B cell (primary cell): ENCODE measurements at regions of chr3 and their contacts with region 1.

Region 1: GRCh38 chr3:38346587-38347410 is at the start of gene XYLB:
- DNase-seq: peak; percentile 79
- ATAC-seq: peak; percentile 98
- H3K4me3 ChIP-seq: peak within 1 kb of the TSS in 4 of 5 experiments; percentile 30 to 68 (median 60)
- H3K4me3 Mint-ChIP-seq: peak within 1 kb of the TSS; percentile 88
- H3K27ac ChIP-seq: no peak within 1 kb of the TSS
- H3K27ac Mint-ChIP-seq: peak within 1 kb of the TSS; percentile 41
- H3K4me1 ChIP-seq: peaks cover 0 to 10% of the 10 kb centered on the region in 2 donors
- H3K4me1 Mint-ChIP-seq: peaks cover 5% of the 10 kb centered on the region
- H3K27me3 ChIP-seq: no peaks in the 10 kb centered on the region
- H3K27me3 Mint-ChIP-seq: peaks cover 2% of the 10 kb centered on the region
- CTCF ChIP-seq: peak; percentile 69
- total RNA-seq, gene XYLB: 0.63 and 0.71 TPM in 2 replicates

Region 2: GRCh38 chr3:38117748-38118420 is 228.9 kb before region 1 on chr3:
- CTCF ChIA-PET with region 1: interaction called, 5 read pairs
- POLR2A ChIA-PET with region 1: no interaction called
- intact Hi-C with region 1: loop called (anchors 2 kb)
- DNase-seq: peak; percentile 71
- ATAC-seq: peak; percentile 84
- H3K4me3 ChIP-seq: no peak overlapping the region
- H3K4me3 Mint-ChIP-seq: no peak overlapping the region
- H3K27ac ChIP-seq: no peak overlapping the region
- H3K27ac Mint-ChIP-seq: no peak overlapping the region
- H3K4me1 ChIP-seq: peaks cover 19 to 23% of the 10 kb centered on the region in 2 donors
- H3K4me1 Mint-ChIP-seq: peaks cover 22% of the 10 kb centered on the region
- H3K27me3 ChIP-seq: no peaks in the 10 kb centered on the region
- H3K27me3 Mint-ChIP-seq: peaks cover 7% of the 10 kb centered on the region
- CTCF ChIP-seq: peak; percentile 81

Region 3: DNA sequence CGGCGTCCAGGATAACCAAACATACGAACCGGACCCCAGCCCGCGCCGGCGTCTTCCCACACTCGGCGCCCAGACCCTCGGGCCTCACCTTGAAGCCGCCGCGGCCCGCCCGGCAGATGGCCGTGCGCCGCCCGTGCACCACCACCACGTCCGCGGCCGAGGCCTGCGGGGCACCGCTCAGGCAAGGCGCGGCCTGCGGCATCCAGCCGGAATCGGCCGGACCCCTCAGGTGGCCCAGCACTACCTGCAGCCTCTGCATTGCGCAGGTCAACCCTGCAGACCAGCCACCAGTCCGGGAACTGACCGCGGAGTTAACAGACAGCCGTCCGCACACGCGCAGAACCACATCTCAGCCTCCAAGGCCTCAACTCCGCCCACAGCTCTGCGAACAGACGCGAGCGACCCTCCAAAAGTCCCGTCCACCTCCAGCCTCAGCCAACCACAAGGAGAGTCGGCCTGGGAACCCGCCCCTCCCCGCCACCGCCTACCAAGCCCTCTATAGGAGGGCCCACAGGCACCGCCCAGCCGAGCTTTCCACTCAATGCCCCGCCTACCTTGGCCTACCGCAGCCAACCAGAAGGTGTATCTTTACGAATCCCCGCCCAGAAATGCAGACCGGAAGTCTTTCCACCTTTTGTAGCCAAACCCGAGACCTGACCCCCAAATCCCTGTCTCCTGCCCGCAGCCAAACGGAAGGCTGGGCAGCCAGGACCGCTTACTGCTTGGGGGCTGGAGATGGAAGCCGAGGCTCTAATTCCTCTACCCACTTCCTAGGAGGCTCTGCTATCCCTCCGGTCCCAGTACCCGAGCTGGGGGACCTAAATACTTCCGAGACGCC is 209.8 kb before region 1 on chr3 and contains the start of gene ACAA1:
- CTCF ChIA-PET with region 1: interaction called, 3 read pairs
- POLR2A ChIA-PET with region 1: no interaction called
- intact Hi-C with region 1: loop called (anchors 5 kb)
- DNase-seq: peak; percentile 99
- ATAC-seq: peak; percentile 91
- H3K4me3 ChIP-seq: peak within 1 kb of the TSS; percentile 84 to 98 (median 92)
- H3K4me3 Mint-ChIP-seq: peak within 1 kb of the TSS; percentile 92
- H3K27ac ChIP-seq: peak within 1 kb of the TSS; percentile 85 to 87
- H3K27ac Mint-ChIP-seq: peak within 1 kb of the TSS; percentile 94
- H3K4me1 ChIP-seq: peaks cover 39 to 52% of the 10 kb centered on the region in 2 donors
- H3K4me1 Mint-ChIP-seq: peaks cover 65% of the 10 kb centered on the region
- H3K27me3 ChIP-seq: no peaks in the 10 kb centered on the region
- H3K27me3 Mint-ChIP-seq: no peaks in the 10 kb centered on the region
- CTCF ChIP-seq: no peak
- total RNA-seq, gene ACAA1: 87.4 and 98.4 TPM in 2 replicates

Region 4: DNA sequence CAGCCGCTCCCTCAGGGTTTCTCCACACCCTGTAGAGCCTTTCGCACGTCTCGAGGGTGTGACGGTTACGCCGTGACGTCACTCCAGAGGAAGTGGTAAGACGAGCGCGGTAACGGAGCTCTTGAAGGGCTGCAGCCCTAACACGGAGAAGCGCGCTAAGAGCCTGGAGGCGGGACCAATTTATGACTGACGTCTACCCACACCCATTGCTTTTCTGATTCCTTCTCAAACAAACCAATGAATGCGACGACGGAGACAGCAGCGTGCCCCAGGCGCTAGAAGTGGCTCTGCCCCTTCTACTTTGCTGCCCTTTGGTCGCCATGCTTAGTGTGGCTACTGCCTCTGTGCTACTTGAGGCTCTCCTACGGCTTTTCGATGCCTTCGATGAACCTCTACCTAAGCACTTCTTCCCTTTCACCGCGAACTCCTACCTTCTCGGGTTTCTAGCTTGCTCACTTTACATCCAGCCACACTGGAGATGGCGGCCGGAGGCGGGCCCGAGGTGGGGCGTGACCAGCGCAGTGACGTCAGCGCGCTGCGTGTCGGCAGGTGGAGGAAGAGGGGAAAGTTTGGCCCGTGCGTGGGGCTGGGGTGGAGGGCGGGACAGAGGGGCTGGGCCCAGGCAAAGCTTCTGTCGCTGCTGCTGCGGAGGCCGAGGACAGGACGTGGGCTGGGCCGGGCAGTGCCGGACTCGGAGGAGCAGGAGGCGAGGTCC is 181.7 kb before region 1 on chr3 and contains the start of gene OXSR1:
- CTCF ChIA-PET with region 1: interaction called, 4 read pairs
- POLR2A ChIA-PET with region 1: no interaction called
- intact Hi-C with region 1: loop called (anchors 2 kb)
- DNase-seq: peak; percentile 99
- ATAC-seq: peak; percentile 89
- H3K4me3 ChIP-seq: peak within 1 kb of the TSS; percentile 64 to 97 (median 85)
- H3K4me3 Mint-ChIP-seq: peak within 1 kb of the TSS; percentile 94
- H3K27ac ChIP-seq: peak within 1 kb of the TSS; percentile 98 to 100
- H3K27ac Mint-ChIP-seq: peak within 1 kb of the TSS; percentile 100
- H3K4me1 ChIP-seq: peaks cover 21 to 28% of the 10 kb centered on the region in 2 donors
- H3K4me1 Mint-ChIP-seq: peaks cover 50% of the 10 kb centered on the region
- H3K27me3 ChIP-seq: no peaks in the 10 kb centered on the region
- H3K27me3 Mint-ChIP-seq: no peaks in the 10 kb centered on the region
- CTCF ChIP-seq: no peak
- total RNA-seq, gene OXSR1: 37.9 and 41.5 TPM in 2 replicates

Region 5: DNA sequence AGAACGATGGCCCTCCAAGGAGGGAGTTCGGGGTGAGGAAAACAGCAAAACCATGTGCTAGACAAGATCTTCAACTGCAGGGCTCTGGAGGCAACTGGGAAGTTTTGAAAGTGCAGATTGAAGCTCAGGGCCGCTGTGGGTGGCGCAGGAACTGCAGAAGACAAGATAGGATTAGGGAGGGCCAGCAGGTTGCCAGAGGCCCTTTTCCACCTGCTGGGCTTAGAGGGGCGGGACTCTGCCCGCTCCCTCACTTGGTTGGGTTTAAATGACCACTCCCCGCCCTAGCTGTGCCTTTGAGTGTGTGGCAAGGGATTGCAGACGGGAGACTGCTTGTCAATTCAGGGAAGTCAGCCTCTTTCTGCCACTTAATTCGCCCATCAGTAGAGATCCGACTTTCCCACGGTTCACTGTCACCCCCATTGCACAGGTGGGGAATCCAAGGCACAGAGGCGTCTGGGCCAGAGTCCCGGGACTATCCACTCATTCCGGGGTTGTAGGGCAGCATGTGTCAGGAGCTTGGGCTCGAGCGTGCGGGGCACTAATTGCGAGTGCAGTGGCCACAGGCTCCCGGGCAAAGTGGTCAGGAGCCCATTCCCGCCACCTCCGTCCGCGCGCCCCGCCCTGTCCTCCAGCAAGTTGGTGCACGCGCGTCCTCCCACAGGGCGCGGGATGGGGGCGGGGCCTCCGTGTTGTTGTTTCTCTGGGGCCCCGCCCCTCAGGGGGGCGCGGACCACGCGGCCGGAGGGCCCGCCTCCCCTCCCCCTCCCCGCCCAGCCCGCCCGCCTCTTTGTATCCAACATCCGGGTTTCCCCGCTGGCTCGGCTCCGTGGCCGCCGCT is 106.5 kb after region 1 on chr3 and contains the start of gene ACVR2B:
- CTCF ChIA-PET with region 1: no interaction called
- POLR2A ChIA-PET with region 1: no interaction called
- intact Hi-C with region 1: loop called (anchors 10 kb)
- DNase-seq: peak; percentile 51
- ATAC-seq: peak; percentile 81
- H3K4me3 ChIP-seq: peak within 1 kb of the TSS; percentile 40 to 63 (median 55)
- H3K4me3 Mint-ChIP-seq: peak within 1 kb of the TSS; percentile 90
- H3K27ac ChIP-seq: no peak within 1 kb of the TSS
- H3K27ac Mint-ChIP-seq: peak within 1 kb of the TSS; percentile 32
- H3K4me1 ChIP-seq: peaks cover 13 to 24% of the 10 kb centered on the region in 2 donors
- H3K4me1 Mint-ChIP-seq: peaks cover 15% of the 10 kb centered on the region
- H3K27me3 ChIP-seq: peaks cover 0 to 33% (median 8%) of the 10 kb centered on the region in 4 experiments
- H3K27me3 Mint-ChIP-seq: peaks cover 31% of the 10 kb centered on the region
- CTCF ChIP-seq: no peak
- total RNA-seq, gene ACVR2B: 3.9 and 4.2 TPM in 2 replicates

Region 6: GRCh38 chr3:38479431-38480092 is 132.8 kb after region 1 on chr3:
- CTCF ChIA-PET with region 1: interaction called, 34 read pairs
- POLR2A ChIA-PET with region 1: no interaction called
- intact Hi-C with region 1: loop called (anchors 2 kb)
- DNase-seq: peak; percentile 57
- ATAC-seq: peak; percentile 65
- H3K4me3 ChIP-seq: no peak overlapping the region
- H3K4me3 Mint-ChIP-seq: no peak overlapping the region
- H3K27ac ChIP-seq: no peak overlapping the region
- H3K27ac Mint-ChIP-seq: no peak overlapping the region
- H3K4me1 ChIP-seq: no peaks in the 10 kb centered on the region
- H3K4me1 Mint-ChIP-seq: no peaks in the 10 kb centered on the region
- H3K27me3 ChIP-seq: no peaks in the 10 kb centered on the region
- H3K27me3 Mint-ChIP-seq: no peaks in the 10 kb centered on the region
- CTCF ChIP-seq: peak; percentile 77